ENCODE measurements at regions of chr16 and their contacts with region 1.

Region 1: GRCh38 chr16:3745751-3746355 is 28.5 kb upstream of the TRAP1 start:
- DNase-seq: no peak
- ATAC-seq: peak; percentile 59 to 73 (median 68)
- H3K4me3 ChIP-seq: no peak overlapping the region
- H3K27ac ChIP-seq: peak overlapping the region; percentile 63
- H3K4me1 ChIP-seq: peaks cover 19% of the 10 kb centered on the region
- H3K27me3 ChIP-seq: no peaks in the 10 kb centered on the region
- CTCF ChIP-seq: no peak

Region 2: DNA sequence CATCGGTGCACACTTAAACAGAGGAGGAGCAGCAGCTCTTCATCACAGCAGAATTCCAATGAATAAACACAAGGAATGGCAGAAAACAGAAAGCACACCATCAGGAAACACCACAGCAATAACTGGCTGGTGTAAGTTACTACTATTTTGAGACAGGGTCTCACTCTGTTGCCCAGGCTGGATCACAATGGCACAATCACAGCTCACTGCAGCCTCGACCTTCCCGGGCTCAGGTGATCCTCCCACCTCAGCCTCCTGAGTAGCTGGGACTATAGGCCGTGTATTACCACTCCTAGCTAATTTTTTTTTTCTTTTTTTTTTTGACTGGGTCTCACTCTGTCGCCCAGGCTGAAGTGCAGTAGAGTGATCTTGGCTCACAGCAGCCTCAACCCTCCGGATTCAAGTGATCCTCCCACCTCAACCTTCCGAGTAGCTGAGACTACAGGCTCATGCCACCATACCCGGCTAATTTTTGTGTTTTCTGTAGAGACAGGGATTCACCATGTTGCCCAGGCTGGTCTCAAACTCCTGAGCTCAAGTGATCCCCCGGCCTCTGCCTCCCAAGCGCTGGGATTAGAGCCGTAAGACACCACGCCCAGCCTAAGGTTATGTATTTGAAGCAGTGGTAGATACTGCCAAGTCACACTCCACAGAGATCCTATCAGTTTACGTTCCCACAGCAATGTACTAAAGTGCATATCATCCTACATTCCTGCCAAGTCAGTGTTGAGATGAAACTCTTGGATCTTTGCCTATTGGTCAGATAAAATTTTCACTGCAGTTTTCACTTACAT is 49.2 kb before region 1 on chr16:
- intact Hi-C with region 1: loop called (anchors 5 kb)
- DNase-seq: peak in 1 of 2 donors; percentile 61
- ATAC-seq: peak; percentile 91 to 93 (median 92)
- H3K4me3 ChIP-seq: peak overlapping the region; percentile 42
- H3K27ac ChIP-seq: peak overlapping the region; percentile 88
- H3K4me1 ChIP-seq: peaks cover 35% of the 10 kb centered on the region
- H3K27me3 ChIP-seq: no peaks in the 10 kb centered on the region
- CTCF ChIP-seq: no peak

Region 3: DNA sequence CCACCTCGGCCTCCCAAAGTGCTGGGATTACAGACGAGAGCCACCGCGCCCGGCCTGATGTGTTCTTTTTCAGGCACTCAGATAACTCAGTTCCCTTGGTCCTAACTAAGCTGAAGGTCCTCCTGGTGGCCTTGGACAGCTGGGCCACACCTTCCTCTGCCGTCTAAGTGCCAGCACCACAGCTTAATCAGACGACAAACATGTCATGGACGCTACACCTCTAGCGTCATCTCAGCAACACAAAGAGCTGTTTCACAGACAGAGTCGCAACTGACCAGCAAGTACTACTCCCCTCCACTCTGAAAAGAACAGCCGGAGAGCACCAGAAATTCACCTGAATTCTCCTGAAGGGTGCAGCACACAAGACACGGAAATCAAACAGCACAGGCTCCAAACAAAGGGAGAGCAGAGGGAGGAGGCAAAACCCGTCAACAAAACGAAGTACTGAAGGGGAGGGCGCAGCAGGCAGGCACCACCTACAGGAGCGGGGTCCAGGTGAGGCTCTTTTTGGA is 32.9 kb before region 1 on chr16:
- intact Hi-C with region 1: loop called in 1 of 2 experiments (anchors 5 kb)
- DNase-seq: peak in 1 of 2 donors; percentile 25
- ATAC-seq: no peak
- H3K4me3 ChIP-seq: no peak overlapping the region
- H3K27ac ChIP-seq: peak overlapping the region; percentile 33
- H3K4me1 ChIP-seq: peaks cover 26% of the 10 kb centered on the region
- H3K27me3 ChIP-seq: no peaks in the 10 kb centered on the region
- CTCF ChIP-seq: no peak

Region 4: DNA sequence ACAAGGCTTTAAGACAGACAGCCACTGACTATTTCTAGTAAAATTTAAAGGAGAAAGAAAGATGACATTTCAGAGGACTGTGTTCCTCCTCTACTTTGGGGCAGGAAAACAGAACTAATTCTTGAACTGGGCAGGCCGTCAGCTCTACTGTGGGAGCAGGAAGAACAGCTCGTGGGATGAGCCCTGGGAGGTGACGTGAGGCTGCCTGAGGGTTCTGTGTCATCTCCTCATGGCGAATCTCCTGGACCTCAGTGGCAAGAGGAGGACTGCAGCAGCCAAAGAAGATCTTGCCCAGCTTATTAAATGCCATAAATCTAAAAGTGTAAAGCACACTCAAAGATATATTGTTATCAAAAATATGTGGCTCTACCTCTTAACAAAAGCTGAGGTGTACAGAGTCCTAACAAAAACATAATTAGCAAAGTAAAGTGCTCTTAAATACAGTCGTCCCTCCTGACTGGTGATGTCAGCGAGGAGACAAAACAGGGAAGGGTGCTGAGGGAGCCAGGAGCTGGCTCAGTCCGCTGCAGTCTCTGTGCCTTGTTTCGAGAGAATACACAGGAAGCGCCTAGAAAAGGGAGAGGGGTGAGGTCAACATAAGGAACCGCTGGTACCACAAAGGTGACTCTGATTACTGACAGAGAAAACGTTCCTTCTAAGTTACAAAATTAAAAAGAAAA is 76.7 kb after region 1 on chr16:
- intact Hi-C with region 1: no loop called
- DNase-seq: peak in 1 of 2 donors; percentile 41
- ATAC-seq: peak in 2 of 4 donors; percentile 36 to 40
- H3K4me3 ChIP-seq: no peak overlapping the region
- H3K27ac ChIP-seq: peak overlapping the region; percentile 36
- H3K4me1 ChIP-seq: peaks cover 93% of the 10 kb centered on the region
- H3K27me3 ChIP-seq: no peaks in the 10 kb centered on the region
- CTCF ChIP-seq: no peak

Measured in psoas muscle (tissue), 8 donors.